Dendritic cell treated with granulocyte-macrophage colony-stimulating factor and Interleukin-4, amounts not matched to agents 40 ng/mL and 50 ng/mL, for 4 days (primary cell): ENCODE measurements at regions of chr7 and their contacts with region 1.

Region 1: DNA sequence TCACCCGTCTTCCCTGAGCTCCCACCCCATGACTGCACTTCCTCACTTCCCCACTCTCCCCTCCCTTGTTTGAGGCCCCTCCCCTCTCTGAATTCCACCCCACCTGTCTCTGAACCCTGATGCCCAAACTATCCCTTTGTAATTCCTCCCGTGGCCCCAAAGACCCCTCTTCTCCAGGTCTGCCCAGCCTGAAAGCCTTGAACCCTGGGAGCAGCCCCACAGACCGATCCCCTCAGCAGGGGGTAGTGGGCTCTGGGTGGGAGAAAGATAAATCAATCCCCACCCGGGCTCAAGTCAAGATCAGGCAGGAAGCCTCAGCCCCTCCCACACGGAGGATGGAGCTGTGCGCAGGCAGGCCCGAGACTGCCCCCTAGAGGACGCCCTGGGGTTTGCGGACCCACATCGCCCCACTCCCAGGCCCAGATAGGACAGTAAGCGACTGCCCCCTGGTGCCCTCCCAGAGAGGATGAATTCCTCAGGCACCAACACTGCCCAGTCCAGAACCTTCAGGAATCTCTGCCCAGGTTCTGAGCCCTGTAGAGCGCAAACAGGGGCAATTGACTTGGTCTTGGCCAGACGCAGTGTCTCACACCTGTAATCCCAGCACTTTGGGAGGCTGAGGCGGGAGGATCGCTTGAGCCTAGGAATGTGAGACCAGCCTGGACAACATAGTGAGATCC is 11.7 kb downstream of the HSPB1 start:
- H3K4me3 Mint-ChIP-seq: no peak overlapping the region
- H3K27ac Mint-ChIP-seq: peak overlapping the region; percentile 16
- H3K4me1 Mint-ChIP-seq: peaks cover 38% of the 10 kb centered on the region
- H3K27me3 Mint-ChIP-seq: peaks cover 4% of the 10 kb centered on the region

Region 2: GRCh38 chr7:76047811-76048667 is 266.1 kb before region 1 on chr7 and contains the starts of genes MDH2 and STYXL1:
- intact Hi-C with region 1: no loop called
- H3K4me3 Mint-ChIP-seq: peak within 1 kb of the TSS; percentile 91
- H3K27ac Mint-ChIP-seq: peak within 1 kb of the TSS; percentile 92
- H3K4me1 Mint-ChIP-seq: peaks cover 67% of the 10 kb centered on the region
- H3K27me3 Mint-ChIP-seq: no peaks in the 10 kb centered on the region

Region 3: GRCh38 chr7:76179686-76180085 is 134.5 kb before region 1 on chr7:
- intact Hi-C with region 1: loop called (anchors 1 kb)
- H3K4me3 Mint-ChIP-seq: no peak overlapping the region
- H3K27ac Mint-ChIP-seq: no peak overlapping the region
- H3K4me1 Mint-ChIP-seq: peaks cover 7% of the 10 kb centered on the region
- H3K27me3 Mint-ChIP-seq: peaks cover 4% of the 10 kb centered on the region

Region 4: GRCh38 chr7:76291343-76292212 is 22.6 kb before region 1 on chr7:
- intact Hi-C with region 1: loop called (anchors 1 kb)
- H3K4me3 Mint-ChIP-seq: peak overlapping the region; percentile 69
- H3K27ac Mint-ChIP-seq: peak overlapping the region; percentile 71
- H3K4me1 Mint-ChIP-seq: peaks cover 57% of the 10 kb centered on the region
- H3K27me3 Mint-ChIP-seq: peaks cover 20% of the 10 kb centered on the region

Region 5: GRCh38 chr7:76359111-76359978 is 45.2 kb after region 1 on chr7:
- intact Hi-C with region 1: loop called (anchors 1 kb)
- H3K4me3 Mint-ChIP-seq: peak overlapping the region; percentile 94
- H3K27ac Mint-ChIP-seq: peak overlapping the region; percentile 100
- H3K4me1 Mint-ChIP-seq: peaks cover 53% of the 10 kb centered on the region
- H3K27me3 Mint-ChIP-seq: no peaks in the 10 kb centered on the region

Region 6: DNA sequence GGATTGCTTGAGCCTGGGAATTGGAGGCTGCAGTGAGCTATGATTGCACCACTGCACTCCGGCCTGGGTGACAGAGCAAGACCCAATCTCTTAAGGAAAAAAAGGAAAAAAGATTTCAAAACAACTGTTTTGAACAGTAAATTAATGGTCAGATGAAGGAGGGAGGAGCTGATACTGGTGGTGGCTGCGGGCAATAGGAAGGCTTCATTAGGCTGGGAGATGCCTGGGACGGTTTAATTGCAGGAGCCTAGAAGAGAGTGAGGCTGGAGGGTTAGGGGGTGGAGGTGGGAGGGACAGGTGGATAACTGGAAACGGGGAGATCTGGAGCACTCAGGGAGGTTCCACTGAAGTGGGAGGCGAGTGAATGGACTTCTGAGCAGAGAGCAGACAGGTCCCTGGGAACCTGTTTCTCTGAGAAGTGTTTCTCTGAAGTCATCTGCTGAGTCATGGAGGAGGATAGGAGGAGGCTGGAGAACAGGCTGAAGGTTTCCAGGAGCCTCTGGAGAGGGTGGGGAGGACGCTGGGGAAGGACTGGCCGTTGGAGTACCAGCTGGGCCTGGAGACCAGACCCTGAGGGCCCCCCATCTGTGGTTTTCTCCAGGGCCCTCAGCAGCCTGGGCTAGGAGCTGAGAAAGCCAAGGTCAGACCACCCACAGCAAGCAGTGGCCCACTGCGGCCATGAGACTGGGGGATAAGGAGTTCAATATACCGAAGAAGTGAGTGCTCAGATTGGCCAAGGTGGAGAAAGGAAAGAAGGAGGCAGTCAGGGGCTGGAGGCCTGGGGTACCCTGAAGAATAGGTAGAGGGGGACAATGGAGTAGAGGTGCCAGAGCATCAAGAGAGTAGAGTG is 59.0 kb after region 1 on chr7:
- intact Hi-C with region 1: no loop called
- H3K4me3 Mint-ChIP-seq: peak overlapping the region; percentile 43
- H3K27ac Mint-ChIP-seq: peak overlapping the region; percentile 84
- H3K4me1 Mint-ChIP-seq: peaks cover 37% of the 10 kb centered on the region
- H3K27me3 Mint-ChIP-seq: no peaks in the 10 kb centered on the region

Region 7: DNA sequence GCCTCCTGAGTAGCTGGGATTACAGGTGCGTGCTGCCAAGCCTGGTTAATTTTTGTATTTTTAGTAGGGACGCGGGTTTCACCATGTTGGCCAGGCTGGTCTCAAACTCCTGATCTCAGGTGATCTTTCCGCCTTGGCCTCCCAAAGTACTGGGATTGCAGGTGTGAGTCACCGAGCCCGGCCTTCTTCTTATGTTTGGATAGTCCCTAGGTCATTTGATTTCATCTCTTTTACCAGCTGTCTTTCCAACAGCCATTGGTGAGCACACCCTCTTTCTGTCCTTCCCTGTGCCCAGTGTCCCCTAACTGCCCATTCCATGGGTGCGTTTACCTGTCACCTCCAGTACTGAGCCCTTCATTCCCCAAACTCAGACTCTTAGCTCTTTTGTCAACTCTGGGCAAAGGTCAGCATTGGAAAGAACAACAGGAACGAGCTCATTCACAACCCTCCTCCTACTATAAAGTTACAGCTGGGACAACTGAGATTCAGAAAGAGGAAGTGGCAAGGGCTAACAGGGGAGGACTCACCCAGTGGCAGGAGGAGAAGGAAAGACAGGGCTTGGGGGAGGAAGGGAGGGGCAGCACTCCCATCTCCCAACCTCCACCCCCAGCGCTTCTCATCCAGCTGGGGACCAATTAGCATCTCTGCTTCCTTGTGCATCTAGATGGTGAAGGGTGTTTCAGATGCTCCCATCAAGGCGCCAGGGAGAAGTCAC is 89.8 kb after region 1 on chr7:
- intact Hi-C with region 1: no loop called
- H3K4me3 Mint-ChIP-seq: peak overlapping the region; percentile 63
- H3K27ac Mint-ChIP-seq: peak overlapping the region; percentile 87
- H3K4me1 Mint-ChIP-seq: peaks cover 56% of the 10 kb centered on the region
- H3K27me3 Mint-ChIP-seq: no peaks in the 10 kb centered on the region